Esophagus muscularis mucosa (tissue), 4 donors: ENCODE measurements at regions of chr15 and their contacts with region 1.

Region 1: DNA sequence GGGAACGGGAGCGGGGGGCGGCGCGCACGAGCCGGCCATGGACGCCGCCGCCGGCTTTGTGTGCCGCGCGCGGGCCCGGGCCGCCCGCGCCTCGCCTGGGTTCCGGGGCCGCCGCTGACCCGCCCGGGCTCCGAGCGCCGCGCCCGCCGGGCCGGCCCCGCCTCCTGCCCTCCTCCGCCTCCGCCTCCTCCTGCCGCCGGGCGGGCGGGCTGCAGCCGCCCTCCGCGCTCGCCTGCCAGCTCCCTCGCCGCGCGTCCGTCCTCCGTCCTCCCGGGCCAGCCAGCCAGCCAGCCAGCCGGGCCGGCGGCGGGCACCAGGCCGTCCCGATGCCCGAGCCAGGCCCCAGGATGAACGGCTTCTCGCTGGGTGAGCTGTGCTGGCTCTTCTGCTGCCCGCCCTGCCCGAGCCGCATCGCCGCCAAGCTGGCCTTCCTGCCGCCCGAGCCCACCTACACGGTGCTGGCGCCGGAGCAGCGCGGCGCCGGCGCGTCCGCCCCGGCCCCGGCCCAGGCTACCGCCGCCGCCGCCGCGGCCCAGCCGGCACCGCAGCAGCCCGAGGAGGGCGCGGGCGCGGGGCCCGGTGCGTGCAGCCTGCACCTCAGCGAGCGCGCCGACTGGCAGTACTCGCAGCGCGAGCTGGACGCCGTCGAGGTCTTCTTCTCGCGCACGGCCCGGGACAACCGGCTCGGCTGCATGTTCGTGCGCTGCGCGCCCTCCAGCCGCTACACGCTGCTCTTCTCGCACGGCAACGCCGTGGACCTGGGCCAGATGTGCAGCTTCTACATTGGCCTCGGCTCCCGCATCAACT is at the start of gene ABHD17C:
- DNase-seq: no peak
- H3K4me3 ChIP-seq: peak within 1 kb of the TSS; percentile 73 to 92 (median 84)
- H3K27ac ChIP-seq: peak within 1 kb of the TSS; percentile 86 to 92 (median 89)
- H3K4me1 ChIP-seq: peaks cover 14 to 36% (median 28%) of the 10 kb centered on the region in 4 donors
- H3K27me3 ChIP-seq: no peaks in the 10 kb centered on the region
- CTCF ChIP-seq: no peak
- EP300 ChIP-seq: no peak
- POLR2A ChIP-seq: no peak
- total RNA-seq, gene ABHD17C: 1.5 to 7.1 (median 3.5) TPM

Region 2: GRCh38 chr15:80183886-80184285 is 511.4 kb before region 1 on chr15:
- intact Hi-C with region 1: no loop called
- DNase-seq: no peak
- H3K4me3 ChIP-seq: no peak overlapping the region
- H3K27ac ChIP-seq: no peak overlapping the region
- H3K4me1 ChIP-seq: peaks cover 0 to 5% (median 0%) of the 10 kb centered on the region in 4 donors
- H3K27me3 ChIP-seq: no peaks in the 10 kb centered on the region
- CTCF ChIP-seq: no peak
- EP300 ChIP-seq: no peak
- POLR2A ChIP-seq: no peak

Region 3: GRCh38 chr15:80660122-80660521 is 35.2 kb before region 1 on chr15:
- intact Hi-C with region 1: no loop called
- DNase-seq: no peak
- H3K4me3 ChIP-seq: no peak overlapping the region
- H3K27ac ChIP-seq: no peak overlapping the region
- H3K4me1 ChIP-seq: no peaks in the 10 kb centered on the region
- H3K27me3 ChIP-seq: no peaks in the 10 kb centered on the region
- CTCF ChIP-seq: peak in 2 of 3 experiments; percentile 7 to 57
- EP300 ChIP-seq: no peak
- POLR2A ChIP-seq: no peak

Region 4: DNA sequence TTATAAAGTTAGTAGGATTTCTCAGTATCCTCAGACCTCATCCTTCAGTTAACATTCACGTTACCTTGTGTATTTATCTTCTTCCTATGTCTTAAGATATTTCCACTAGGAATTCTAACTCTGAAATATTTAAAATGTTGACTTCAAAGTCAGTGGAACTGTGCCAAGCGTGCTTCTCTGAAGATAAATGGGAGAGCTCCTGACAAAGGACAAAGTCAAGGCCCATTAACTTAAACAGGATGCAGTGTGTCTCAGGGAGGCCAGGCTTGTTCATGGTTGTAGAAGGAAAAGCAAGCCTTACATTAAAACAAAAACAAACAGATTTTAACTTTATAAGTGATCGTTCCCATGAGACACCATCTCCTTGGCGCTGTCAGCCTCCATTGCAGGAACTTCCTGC is 41.3 kb after region 1 on chr15:
- intact Hi-C with region 1: loop called (anchors 5 kb)
- DNase-seq: no peak
- H3K4me3 ChIP-seq: no peak overlapping the region
- H3K27ac ChIP-seq: peak overlapping the region; percentile 4 to 43 (median 37)
- H3K4me1 ChIP-seq: peaks cover 14 to 60% (median 58%) of the 10 kb centered on the region in 4 donors
- H3K27me3 ChIP-seq: no peaks in the 10 kb centered on the region
- CTCF ChIP-seq: no peak
- EP300 ChIP-seq: no peak
- POLR2A ChIP-seq: no peak

Region 5: GRCh38 chr15:80989518-80990478 is 294.5 kb after region 1 on chr15 and contains the start of gene MESD:
- intact Hi-C with region 1: loop called (anchors 10 kb)
- DNase-seq: peak; percentile 100
- H3K4me3 ChIP-seq: peak within 1 kb of the TSS; percentile 83 to 86 (median 84)
- H3K27ac ChIP-seq: peak within 1 kb of the TSS; percentile 87 to 89 (median 89)
- H3K4me1 ChIP-seq: peaks cover 50 to 59% (median 56%) of the 10 kb centered on the region in 4 donors
- H3K27me3 ChIP-seq: no peaks in the 10 kb centered on the region
- CTCF ChIP-seq: no peak
- EP300 ChIP-seq: no peak
- POLR2A ChIP-seq: peak; percentile 85
- total RNA-seq, gene MESD: 14.1 to 17.4 (median 14.5) TPM